Activated T-helper 2 cell treated with anti-CD3 and anti-CD28 coated beads, Interferon-gamma antibody, Interleukin-2, Interleukin-4, amounts not matched to agents 10 μg/mL and 5 μg/mL and 100 μg/mL, durations not matched to agents 14 hours and 24 hours and 36 hours (primary cell): ENCODE measurements at regions of chr1 and their contacts with region 1.

Region 1: GRCh38 chr1:24688621-24689195 is 45.6 kb downstream of the SRRM1 start:
- DNase-seq: peak; percentile 45
- H3K4me3 Mint-ChIP-seq: no peak overlapping the region
- H3K27ac Mint-ChIP-seq: no peak overlapping the region
- H3K4me1 Mint-ChIP-seq: peaks cover 3% of the 10 kb centered on the region
- H3K27me3 Mint-ChIP-seq: no peaks in the 10 kb centered on the region

Region 2: DNA sequence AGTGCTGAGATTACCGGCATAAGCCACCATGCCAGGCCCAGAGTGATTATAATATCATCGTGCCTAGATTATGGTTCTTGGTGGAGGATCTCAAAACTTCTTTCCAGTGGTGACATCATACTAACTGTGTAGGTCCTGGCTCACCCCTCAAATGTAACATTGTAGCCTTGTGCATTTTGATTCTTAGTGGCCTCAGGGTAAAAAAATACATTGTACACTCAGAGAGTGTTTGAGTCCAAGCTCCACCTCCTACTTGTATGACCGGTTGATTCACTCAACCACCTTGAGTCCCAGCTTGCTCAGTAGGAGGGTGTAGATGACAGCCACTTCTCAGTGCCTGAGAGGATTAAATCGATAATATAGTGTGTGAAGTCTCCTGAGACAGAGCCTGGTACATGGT is 94.6 kb before region 1 on chr1:
- intact Hi-C with region 1: no loop called
- DNase-seq: no peak
- H3K4me3 Mint-ChIP-seq: no peak overlapping the region
- H3K27ac Mint-ChIP-seq: no peak overlapping the region
- H3K4me1 Mint-ChIP-seq: no peaks in the 10 kb centered on the region
- H3K27me3 Mint-ChIP-seq: peaks cover 10% of the 10 kb centered on the region

Region 3: DNA sequence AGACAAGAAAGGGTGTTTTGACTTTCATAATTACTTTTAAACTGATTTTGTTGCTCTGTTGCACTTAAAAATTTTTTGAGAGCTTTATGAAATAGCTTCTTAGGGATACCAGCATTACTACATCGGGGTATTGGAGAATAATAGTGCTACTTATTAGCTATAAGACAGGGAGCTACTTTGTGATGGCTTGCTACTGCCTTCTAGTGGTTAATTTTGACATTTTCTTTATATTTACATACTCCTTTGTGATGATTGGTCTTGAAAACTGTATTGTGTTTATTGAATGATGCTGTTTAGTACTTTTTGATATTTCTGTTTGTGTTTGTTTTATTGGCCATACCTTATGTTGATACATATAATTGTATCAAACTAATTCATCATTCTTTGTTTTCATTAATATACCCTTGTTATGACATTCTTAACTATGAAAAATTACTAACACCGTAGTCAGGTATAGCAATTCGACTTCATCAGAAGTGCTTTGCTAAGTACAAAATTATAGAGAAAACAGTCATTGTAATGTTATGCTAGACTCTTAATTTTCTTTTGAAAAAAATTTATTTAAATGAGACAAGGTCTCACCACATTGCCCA is 142.1 kb after region 1 on chr1:
- intact Hi-C with region 1: loop called (anchors 2 kb)
- DNase-seq: no peak
- H3K4me3 Mint-ChIP-seq: no peak overlapping the region
- H3K27ac Mint-ChIP-seq: no peak overlapping the region
- H3K4me1 Mint-ChIP-seq: peaks cover 8% of the 10 kb centered on the region
- H3K27me3 Mint-ChIP-seq: no peaks in the 10 kb centered on the region